ENCODE measurements at regions of chr5 and their contacts with region 1.

Region 1: GRCh38 chr5:170633235-170634081 is 129.6 kb downstream of the KCNIP1 start:
- DNase-seq: peak; percentile 20
- ATAC-seq: peak; percentile 23; the same call in 2 of the 3 replicates
- H3K4me3 ChIP-seq: no peak overlapping the region
- H3K27ac ChIP-seq: no peak overlapping the region
- H3K4me1 ChIP-seq: no peaks in the 10 kb centered on the region
- H3K27me3 ChIP-seq: no peaks in the 10 kb centered on the region
- CTCF ChIP-seq: no peak
- EP300 ChIP-seq: no peak
- POLR2A ChIP-seq: no peak
- RAD21 ChIP-seq: no peak

Region 2: DNA sequence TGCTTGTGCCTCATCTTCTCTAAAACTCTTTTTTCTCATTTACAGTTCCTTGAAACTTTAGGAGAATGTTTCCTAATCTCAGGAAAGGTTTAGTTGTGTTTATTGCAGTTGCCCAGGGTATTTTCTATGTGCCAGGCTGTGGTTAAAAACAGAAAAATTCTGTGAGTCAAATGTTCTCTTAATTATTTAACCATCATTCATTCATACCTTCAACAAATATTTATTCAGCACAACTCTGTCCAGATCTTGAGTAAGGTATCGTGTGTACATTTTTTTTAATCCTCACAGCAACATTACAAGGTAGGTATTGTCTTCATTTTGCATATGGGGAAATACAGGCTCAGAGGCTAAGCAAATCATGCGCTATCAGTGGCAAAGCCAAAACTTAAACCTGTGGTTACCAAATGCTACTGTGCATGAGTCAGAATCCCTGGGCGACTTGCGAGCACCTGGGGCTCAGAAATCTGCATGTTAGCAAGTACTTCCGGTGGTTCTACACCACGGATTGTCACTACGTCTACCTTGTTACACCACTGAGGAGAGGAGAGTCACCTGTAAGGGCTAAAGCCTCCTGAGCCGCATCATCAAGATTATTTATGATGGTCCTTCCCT is 379.5 kb before region 1 on chr5:
- CTCF ChIA-PET with region 1: no interaction called
- POLR2A ChIA-PET with region 1: no interaction called
- RAD21 ChIA-PET with region 1: no interaction called
- SMC1A ChIA-PET with region 1: no interaction called
- in situ Hi-C with region 1: no loop called
- intact Hi-C with region 1: no loop called
- DNase-seq: peak; percentile 49
- ATAC-seq: peak; percentile 94
- H3K4me3 ChIP-seq: no peak overlapping the region
- H3K27ac ChIP-seq: no peak overlapping the region
- H3K4me1 ChIP-seq: no peaks in the 10 kb centered on the region
- H3K27me3 ChIP-seq: no peaks in the 10 kb centered on the region
- CTCF ChIP-seq: no peak
- EP300 ChIP-seq: no peak
- POLR2A ChIP-seq: no peak
- RAD21 ChIP-seq: no peak

Region 3: DNA sequence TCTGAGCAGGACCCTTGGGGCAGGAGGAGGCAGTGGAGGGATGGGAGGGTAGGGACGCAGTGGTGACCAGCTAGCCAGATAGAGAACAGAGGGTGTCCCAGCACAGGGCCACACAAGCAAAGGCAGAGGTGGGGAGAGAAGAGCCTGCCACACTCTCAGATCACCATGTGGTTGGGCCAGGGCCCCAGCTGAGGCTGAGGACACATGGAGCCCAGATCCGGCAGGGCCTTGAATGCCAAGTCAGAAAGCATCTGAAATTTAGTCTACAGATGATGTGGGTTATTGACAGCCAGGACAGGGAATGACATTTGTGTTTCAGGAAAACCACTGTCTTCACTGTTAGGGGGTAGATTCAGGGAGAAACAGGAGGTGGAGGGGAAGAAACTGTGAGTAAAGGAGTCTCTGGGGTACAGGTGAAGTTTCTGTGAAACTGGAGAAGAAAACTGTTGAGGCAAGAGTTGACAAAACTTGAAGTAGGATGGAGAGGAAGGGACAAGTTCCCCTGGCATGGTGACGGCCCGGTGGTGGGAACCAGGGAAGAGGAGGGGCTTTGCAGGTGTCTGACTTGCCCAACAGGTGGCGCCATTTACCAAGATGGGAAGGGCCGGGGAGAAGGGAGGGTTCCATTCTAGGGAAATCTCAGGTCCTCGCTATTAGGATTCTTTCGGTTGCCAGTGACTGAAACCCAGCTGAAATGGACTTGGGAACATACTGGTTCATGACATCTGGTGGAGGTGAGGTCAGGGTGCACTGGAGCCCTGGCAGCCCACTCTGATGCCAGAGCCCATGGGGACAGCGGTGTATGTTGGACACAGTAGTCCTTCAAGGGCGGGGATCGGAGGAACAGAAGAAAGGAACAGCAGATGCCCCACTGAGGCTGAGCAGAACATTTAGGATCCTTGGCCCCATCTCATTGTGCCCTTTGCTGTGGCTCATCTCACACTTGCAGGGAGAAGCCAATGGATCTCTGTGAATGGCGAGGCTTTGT is 29.6 kb before region 1 on chr5:
- CTCF ChIA-PET with region 1: interaction called, 4 read pairs
- POLR2A ChIA-PET with region 1: no interaction called
- RAD21 ChIA-PET with region 1: interaction called, 3 read pairs
- SMC1A ChIA-PET with region 1: no interaction called
- in situ Hi-C with region 1: no loop called
- intact Hi-C with region 1: loop called (anchors 1 kb)
- DNase-seq: no peak
- ATAC-seq: peak; percentile 87
- H3K4me3 ChIP-seq: no peak overlapping the region
- H3K27ac ChIP-seq: no peak overlapping the region
- H3K4me1 ChIP-seq: no peaks in the 10 kb centered on the region
- H3K27me3 ChIP-seq: peaks cover 0 to 4% of the 10 kb centered on the region in 2 experiments; a peak in 2 of 4 replicates
- CTCF ChIP-seq: peak; percentile 56 to 70 (median 65)
- EP300 ChIP-seq: no peak
- POLR2A ChIP-seq: no peak
- RAD21 ChIP-seq: peak; percentile 55

Measured in GM12878 (cell line).